ENCODE measurements at regions of chr6 and their contacts with region 1.

Region 1: GRCh38 chr6:150632785-150633485 is 33.2 kb downstream of the PLEKHG1 start:
- DNase-seq: peak; percentile 17
- H3K4me3 Mint-ChIP-seq: peak overlapping the region; percentile 57
- H3K27ac Mint-ChIP-seq: peak overlapping the region; percentile 84
- H3K4me1 Mint-ChIP-seq: peaks cover 62% of the 10 kb centered on the region
- H3K27me3 Mint-ChIP-seq: peaks cover 44% of the 10 kb centered on the region

Region 2: DNA sequence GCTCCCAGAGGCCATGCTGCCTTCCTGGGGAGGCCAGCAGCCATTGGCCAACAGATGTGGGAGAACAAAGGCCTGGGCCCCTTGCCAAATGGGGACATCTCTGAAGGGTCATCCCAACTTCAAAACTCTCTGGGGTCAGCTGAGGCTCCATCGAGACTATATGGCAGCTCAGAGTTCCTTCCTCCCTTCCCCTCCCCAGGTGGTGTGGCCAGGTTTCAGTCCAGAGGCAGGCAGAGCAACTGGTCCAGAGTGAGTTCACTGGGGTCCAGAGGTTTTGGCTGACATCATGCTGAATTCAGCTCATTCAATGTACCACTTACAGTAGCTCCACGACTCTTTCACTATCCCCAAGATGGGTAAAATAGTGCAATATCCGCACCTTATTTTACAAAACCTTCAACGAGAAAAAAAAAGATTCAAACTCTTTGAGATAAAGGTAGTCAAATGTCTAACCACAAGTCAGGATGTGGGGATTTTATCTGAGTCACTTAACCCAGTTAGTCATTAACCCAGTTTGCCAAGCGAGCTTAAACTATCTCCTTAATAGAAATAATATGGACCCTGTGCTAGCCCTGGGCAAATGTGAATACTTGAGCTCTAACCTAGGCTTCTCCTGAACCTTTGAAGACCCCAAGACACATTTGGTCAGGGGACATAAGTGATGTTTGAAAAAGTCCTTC is 141.7 kb before region 1 on chr6:
- CTCF ChIA-PET with region 1: no interaction called
- intact Hi-C with region 1: loop called (anchors 5 kb)
- DNase-seq: peak; percentile 20
- H3K4me3 Mint-ChIP-seq: peak overlapping the region; percentile 51
- H3K27ac Mint-ChIP-seq: peak overlapping the region; percentile 82
- H3K4me1 Mint-ChIP-seq: peaks cover 9% of the 10 kb centered on the region
- H3K27me3 Mint-ChIP-seq: peaks cover 6% of the 10 kb centered on the region

Measured in activated naive CD4-positive, alpha-beta T cell treated with anti-CD3 and anti-CD28 coated beads for 36 hours (primary cell).